CD4-positive, alpha-beta memory T cell (primary cell): ENCODE measurements at regions of chr20 and their contacts with region 1.

Region 1: GRCh38 chr20:645318-646106 is 7.5 kb downstream of the SRXN1 start:
- DNase-seq: peak in 4 of 5 donors; percentile 49 to 63 (median 52)
- H3K4me3 ChIP-seq: no peak overlapping the region
- H3K4me3 Mint-ChIP-seq: peak overlapping the region in 3 of 8 donors; percentile 15 to 29 (median 26)
- H3K27ac ChIP-seq: no peak overlapping the region
- H3K27ac Mint-ChIP-seq: peak overlapping the region in 1 of 7 donors; percentile 16
- H3K4me1 ChIP-seq: peaks cover 11% of the 10 kb centered on the region
- H3K4me1 Mint-ChIP-seq: peaks cover 6 to 30% (median 21%) of the 10 kb centered on the region in 4 donors
- H3K27me3 ChIP-seq: peaks cover 11% of the 10 kb centered on the region
- H3K27me3 Mint-ChIP-seq: peaks cover 3 to 8% of the 10 kb centered on the region in 2 donors

Region 2: GRCh38 chr20:528923-529604 is 116.4 kb before region 1 on chr20:
- CTCF ChIA-PET with region 1: no interaction called
- POLR2A ChIA-PET with region 1: no interaction called
- intact Hi-C with region 1: no loop called
- DNase-seq: no peak
- H3K4me3 ChIP-seq: no peak overlapping the region
- H3K4me3 Mint-ChIP-seq: no peak overlapping the region
- H3K27ac ChIP-seq: no peak overlapping the region
- H3K27ac Mint-ChIP-seq: peak overlapping the region in 1 of 7 donors; percentile 29
- H3K4me1 ChIP-seq: peaks cover 15% of the 10 kb centered on the region
- H3K4me1 Mint-ChIP-seq: peaks cover 23 to 44% (median 31%) of the 10 kb centered on the region in 4 donors
- H3K27me3 ChIP-seq: no peaks in the 10 kb centered on the region
- H3K27me3 Mint-ChIP-seq: no peaks in the 10 kb centered on the region

Region 3: DNA sequence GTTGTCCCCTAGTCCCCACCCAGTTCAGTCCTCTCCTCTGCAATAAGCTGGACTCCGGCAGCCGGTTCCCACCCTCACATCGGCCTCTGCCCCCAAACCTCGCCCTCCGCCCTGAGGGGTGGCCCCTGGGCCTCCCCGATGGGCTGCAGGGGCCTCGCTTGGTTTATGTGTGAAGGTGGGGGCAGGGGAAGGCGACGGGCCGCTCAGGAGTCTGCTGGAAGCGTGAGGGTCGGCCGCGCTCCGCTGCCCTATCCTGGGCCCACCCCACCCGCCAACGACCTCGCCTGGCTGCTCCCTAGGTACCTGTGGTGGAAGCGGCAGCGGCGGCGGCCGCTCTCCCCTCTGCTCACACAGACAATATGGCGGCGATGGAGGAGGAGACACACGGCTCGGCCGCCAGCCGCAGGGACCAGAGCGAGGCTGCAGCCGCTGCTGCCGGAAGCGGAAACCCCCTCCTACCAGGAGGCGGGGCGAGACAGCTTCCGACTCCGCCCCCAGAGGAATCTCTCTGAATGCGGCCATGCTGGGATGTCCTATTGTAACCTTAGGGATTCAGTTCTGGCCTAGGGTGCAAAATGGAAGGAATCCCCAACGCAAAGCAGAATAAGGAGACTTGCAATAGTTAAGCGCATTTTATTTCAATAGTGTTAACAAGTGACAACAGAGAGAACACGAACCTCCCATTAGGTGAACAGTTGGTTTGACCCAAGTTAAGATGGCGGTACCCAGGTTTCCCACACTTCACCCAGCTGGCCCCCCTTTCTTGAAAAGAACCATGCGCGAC is 102.0 kb before region 1 on chr20 and contains the start of gene CSNK2A1:
- CTCF ChIA-PET with region 1: interaction called, 11 read pairs
- POLR2A ChIA-PET with region 1: no interaction called
- intact Hi-C with region 1: no loop called
- DNase-seq: peak; percentile 94 to 99 (median 97)
- H3K4me3 ChIP-seq: peak within 1 kb of the TSS; percentile 45 to 93
- H3K4me3 Mint-ChIP-seq: peak within 1 kb of the TSS; percentile 85 to 100 (median 92)
- H3K27ac ChIP-seq: peak within 1 kb of the TSS; percentile 80
- H3K27ac Mint-ChIP-seq: peak within 1 kb of the TSS; percentile 98 to 100 (median 99)
- H3K4me1 ChIP-seq: peaks cover 50% of the 10 kb centered on the region
- H3K4me1 Mint-ChIP-seq: peaks cover 28 to 56% (median 43%) of the 10 kb centered on the region in 4 donors
- H3K27me3 ChIP-seq: no peaks in the 10 kb centered on the region
- H3K27me3 Mint-ChIP-seq: peaks cover 0 to 5% of the 10 kb centered on the region in 2 donors
- total RNA-seq, gene CSNK2A1: 81.6 to 87.8 TPM

Region 4: GRCh38 chr20:561437-562231 is 83.9 kb before region 1 on chr20:
- CTCF ChIA-PET with region 1: interaction called, 10 read pairs
- POLR2A ChIA-PET with region 1: no interaction called
- intact Hi-C with region 1: loop called (anchors 1 kb)
- DNase-seq: peak in 4 of 5 donors; percentile 8 to 29 (median 20)
- H3K4me3 ChIP-seq: no peak overlapping the region
- H3K4me3 Mint-ChIP-seq: peak overlapping the region in 2 of 8 donors; percentile 19 to 21
- H3K27ac ChIP-seq: no peak overlapping the region
- H3K27ac Mint-ChIP-seq: peak overlapping the region in 1 of 7 donors; percentile 83
- H3K4me1 ChIP-seq: no peaks in the 10 kb centered on the region
- H3K4me1 Mint-ChIP-seq: peaks cover 0 to 5% (median 2%) of the 10 kb centered on the region in 4 donors
- H3K27me3 ChIP-seq: no peaks in the 10 kb centered on the region
- H3K27me3 Mint-ChIP-seq: peaks cover 5 to 18% of the 10 kb centered on the region in 2 donors

Region 5: DNA sequence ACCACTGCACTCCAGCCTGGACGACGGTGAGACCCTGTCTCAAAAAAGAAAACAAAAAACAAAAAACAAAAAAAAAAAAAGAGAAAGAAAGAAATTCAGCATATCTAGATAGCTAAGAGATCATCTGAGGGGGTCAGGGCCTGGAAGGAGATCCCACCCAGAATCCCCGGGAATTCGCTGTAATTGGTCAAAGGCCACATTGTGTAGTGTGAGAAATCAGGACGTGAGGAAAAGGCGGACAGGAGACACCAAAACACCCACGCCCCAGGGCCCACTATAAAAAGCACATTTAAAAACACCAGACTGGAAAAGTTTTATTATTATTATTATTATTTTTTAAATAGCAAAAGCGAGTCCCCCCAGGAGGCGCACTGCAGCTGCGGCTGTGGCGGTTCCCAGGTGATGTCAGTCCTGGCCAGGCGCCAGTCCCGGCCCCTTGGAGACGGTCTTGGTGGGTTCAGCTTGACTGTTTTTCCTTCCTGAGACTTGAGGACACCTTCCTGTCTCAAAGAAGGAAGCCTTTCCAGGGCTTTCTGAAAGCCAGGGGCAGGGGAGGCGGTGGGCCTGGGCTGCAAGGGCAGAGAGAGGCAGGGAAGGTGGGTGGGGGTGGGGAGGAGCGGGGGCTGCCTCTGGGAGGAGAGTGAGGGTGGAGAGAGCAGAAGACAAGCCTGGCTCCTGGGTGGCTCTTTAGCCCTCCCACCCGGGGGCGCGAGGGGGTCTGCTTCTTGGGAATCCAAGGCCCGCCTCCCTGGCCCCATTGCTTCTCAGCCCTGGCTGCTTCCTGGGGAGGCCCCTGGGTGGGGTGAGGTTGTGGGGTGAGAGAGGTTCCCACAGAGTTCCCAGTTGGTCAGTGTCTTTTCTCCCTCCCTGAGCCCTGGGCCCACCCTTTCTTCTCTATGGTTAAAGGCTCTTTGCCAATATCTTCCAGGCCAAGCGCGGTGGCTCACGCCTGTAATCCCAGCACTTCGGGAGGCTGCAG is 49.9 kb before region 1 on chr20:
- CTCF ChIA-PET with region 1: no interaction called
- POLR2A ChIA-PET with region 1: no interaction called
- intact Hi-C with region 1: no loop called
- DNase-seq: no peak
- H3K4me3 ChIP-seq: no peak overlapping the region
- H3K4me3 Mint-ChIP-seq: no peak overlapping the region
- H3K27ac ChIP-seq: no peak overlapping the region
- H3K27ac Mint-ChIP-seq: no peak overlapping the region
- H3K4me1 ChIP-seq: no peaks in the 10 kb centered on the region
- H3K4me1 Mint-ChIP-seq: no peaks in the 10 kb centered on the region
- H3K27me3 ChIP-seq: no peaks in the 10 kb centered on the region
- H3K27me3 Mint-ChIP-seq: peaks cover 11 to 16% of the 10 kb centered on the region in 2 donors

Region 6: GRCh38 chr20:631101-631500 is 14.4 kb before region 1 on chr20:
- CTCF ChIA-PET with region 1: interaction called, 12 read pairs
- POLR2A ChIA-PET with region 1: no interaction called
- intact Hi-C with region 1: no loop called
- DNase-seq: no peak
- H3K4me3 ChIP-seq: no peak overlapping the region
- H3K4me3 Mint-ChIP-seq: no peak overlapping the region
- H3K27ac ChIP-seq: no peak overlapping the region
- H3K27ac Mint-ChIP-seq: no peak overlapping the region
- H3K4me1 ChIP-seq: no peaks in the 10 kb centered on the region
- H3K4me1 Mint-ChIP-seq: no peaks in the 10 kb centered on the region
- H3K27me3 ChIP-seq: no peaks in the 10 kb centered on the region
- H3K27me3 Mint-ChIP-seq: peaks cover 14 to 17% of the 10 kb centered on the region in 2 donors

Region 7: GRCh38 chr20:667391-667964 is 22.0 kb after region 1 on chr20:
- CTCF ChIA-PET with region 1: interaction called, 12 read pairs
- POLR2A ChIA-PET with region 1: no interaction called
- intact Hi-C with region 1: no loop called
- DNase-seq: peak; percentile 20 to 48 (median 36)
- H3K4me3 ChIP-seq: no peak overlapping the region
- H3K4me3 Mint-ChIP-seq: no peak overlapping the region
- H3K27ac ChIP-seq: no peak overlapping the region
- H3K27ac Mint-ChIP-seq: no peak overlapping the region
- H3K4me1 ChIP-seq: no peaks in the 10 kb centered on the region
- H3K4me1 Mint-ChIP-seq: peaks cover 1 to 12% (median 7%) of the 10 kb centered on the region in 4 donors
- H3K27me3 ChIP-seq: peaks cover 8% of the 10 kb centered on the region
- H3K27me3 Mint-ChIP-seq: peaks cover 49 to 61% of the 10 kb centered on the region in 2 donors